Mammary epithelial cell (primary cell): ENCODE measurements at regions of chr12 and their contacts with region 1.

Region 1: GRCh38 chr12:48105862-48106680 is at the start of gene SENP1:
- DNase-seq: peak; percentile 85
- H3K4me3 ChIP-seq: peak within 1 kb of the TSS; percentile 66 to 91 (median 86)
- H3K27ac ChIP-seq: peak within 1 kb of the TSS; percentile 94
- H3K4me1 ChIP-seq: peaks cover 25% of the 10 kb centered on the region
- H3K27me3 ChIP-seq: no peaks in the 10 kb centered on the region
- CTCF ChIP-seq: peak in 1 of 2 donors; percentile 28
- total RNA-seq, gene SENP1: 20.3 to 24.7 TPM

Region 2: DNA sequence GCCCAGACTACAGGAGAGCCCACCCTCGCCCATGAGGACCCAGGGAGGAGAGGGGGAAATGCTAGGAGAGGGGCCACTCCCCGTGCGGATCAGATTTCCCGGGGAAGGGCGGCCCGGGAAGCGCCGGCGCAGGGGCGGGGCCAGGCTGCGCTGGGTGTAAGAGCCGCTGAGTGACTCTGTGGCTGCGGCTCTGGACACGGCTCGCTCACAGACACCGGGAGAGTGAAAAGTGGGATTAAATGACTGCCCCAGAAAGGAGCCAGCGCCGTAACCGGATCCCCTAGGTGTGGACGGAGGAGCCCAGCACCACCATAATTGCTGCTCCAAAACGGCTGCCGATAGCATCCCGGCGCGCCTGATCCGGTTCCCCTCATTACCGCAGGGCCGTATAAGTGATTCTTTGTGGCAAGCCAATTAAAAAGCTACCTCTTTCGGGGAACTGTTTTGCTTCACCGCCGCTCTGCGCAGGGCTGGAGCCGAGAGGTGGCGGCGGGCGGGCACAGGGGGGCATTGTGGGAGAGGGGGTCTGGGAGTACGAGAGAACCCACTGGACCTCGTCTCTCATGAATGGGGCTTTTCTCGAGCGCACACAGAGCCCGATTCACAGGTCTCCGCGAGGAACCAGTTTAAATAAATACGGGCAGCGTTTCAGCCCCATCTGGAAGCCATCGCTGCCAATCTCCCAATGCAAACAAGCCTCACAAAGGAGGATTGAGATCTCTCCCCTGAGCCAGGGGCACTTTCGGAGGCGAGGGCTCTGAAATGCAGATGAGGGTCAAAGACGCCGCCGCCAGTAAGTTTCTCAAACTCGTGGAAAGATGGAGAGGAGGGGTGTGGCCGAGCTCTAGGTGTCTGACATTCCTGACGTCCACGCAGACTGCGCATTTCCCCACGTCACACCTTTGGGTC is 104.3 kb before region 1 on chr12:
- CTCF ChIA-PET with region 1: no interaction called
- dilution Hi-C with region 1: no loop called
- in situ Hi-C with region 1: no loop called
- intact Hi-C with region 1: loop called (anchors 2 kb)
- DNase-seq: peak; percentile 64
- H3K4me3 ChIP-seq: peak overlapping the region; percentile 43 to 74 (median 54)
- H3K27ac ChIP-seq: peak overlapping the region; percentile 78
- H3K4me1 ChIP-seq: peaks cover 25% of the 10 kb centered on the region
- H3K27me3 ChIP-seq: peaks cover 12% of the 10 kb centered on the region
- CTCF ChIP-seq: no peak